Heart right ventricle (tissue), 16 donors: ENCODE measurements at regions of chr9 and their contacts with region 1.

Region 1: GRCh38 chr9:83794051-83794450 is 23.5 kb downstream of the GKAP1 start:
- DNase-seq: no peak
- ATAC-seq: no peak
- H3K4me3 ChIP-seq: no peak overlapping the region
- H3K27ac ChIP-seq: no peak overlapping the region
- H3K4me1 ChIP-seq: no peaks in the 10 kb centered on the region
- H3K27me3 ChIP-seq: no peaks in the 10 kb centered on the region
- CTCF ChIP-seq: no peak

Region 2: GRCh38 chr9:83432104-83432639 is 361.9 kb before region 1 on chr9:
- intact Hi-C with region 1: no loop called
- DNase-seq: peak; percentile 69 to 81
- ATAC-seq: peak; percentile 59 to 95 (median 87)
- H3K4me3 ChIP-seq: no peak overlapping the region
- H3K27ac ChIP-seq: peak overlapping the region in 8 of 10 donors; percentile 7 to 70 (median 38)
- H3K4me1 ChIP-seq: peaks cover 10 to 48% (median 32%) of the 10 kb centered on the region in 9 donors
- H3K27me3 ChIP-seq: no peaks in the 10 kb centered on the region
- CTCF ChIP-seq: no peak

Region 3: GRCh38 chr9:83714329-83714728 is 79.7 kb before region 1 on chr9:
- intact Hi-C with region 1: loop called in 1 of 10 experiments (anchors 10 kb)
- DNase-seq: no peak
- ATAC-seq: no peak
- H3K4me3 ChIP-seq: no peak overlapping the region
- H3K27ac ChIP-seq: no peak overlapping the region
- H3K4me1 ChIP-seq: no peaks in the 10 kb centered on the region
- H3K27me3 ChIP-seq: no peaks in the 10 kb centered on the region
- CTCF ChIP-seq: peak in 6 of 9 donors; percentile 15 to 36 (median 22)